ENCODE measurements at regions of chr20 and their contacts with region 1.

Region 1: DNA sequence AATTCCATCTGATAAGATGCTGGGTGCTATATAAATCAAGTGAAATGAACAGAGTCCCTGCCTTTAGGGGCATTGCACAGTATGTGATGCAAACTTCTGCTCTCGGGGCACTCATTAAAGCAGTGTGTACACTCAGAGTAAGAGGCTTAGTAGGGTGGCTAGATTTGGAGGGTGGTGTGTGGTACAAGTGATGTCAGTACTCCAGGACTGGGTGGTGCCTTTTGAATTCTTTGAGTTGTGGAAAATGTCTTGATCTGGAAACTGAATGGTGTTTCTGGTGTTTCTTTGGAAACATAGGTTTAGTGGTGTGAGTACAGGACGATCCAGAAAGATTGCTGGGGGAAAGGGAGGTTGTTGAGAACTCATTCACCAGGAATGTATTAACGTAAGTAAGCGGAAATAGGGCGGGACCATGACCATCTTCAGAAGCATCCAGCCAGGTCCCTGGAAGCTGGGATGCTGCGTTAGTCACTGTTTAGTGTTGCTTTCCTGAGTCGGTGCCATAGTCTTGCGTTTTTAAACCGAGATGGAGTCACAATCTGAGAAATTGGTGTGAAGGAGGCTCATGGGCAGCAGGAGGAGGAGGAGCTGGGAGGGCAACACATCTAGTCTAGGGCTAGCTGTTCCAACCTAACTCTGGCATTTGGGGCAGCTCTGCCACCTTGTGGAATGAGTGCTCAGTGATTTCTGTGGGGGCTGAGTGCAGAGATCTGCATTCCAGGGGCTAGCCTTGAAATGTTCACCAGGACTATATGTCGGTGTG is 70.3 kb downstream of the SCAND1 start:
- DNase-seq: peak; percentile 56 to 97
- H3K4me3 ChIP-seq: peak overlapping the region in 1 of 2 donors; percentile 39
- H3K27ac ChIP-seq: peak overlapping the region; percentile 89 to 97
- H3K4me1 ChIP-seq: peaks cover 0 to 7% of the 10 kb centered on the region in 2 donors
- H3K27me3 ChIP-seq: no peaks in the 10 kb centered on the region
- CTCF ChIP-seq: peak; percentile 68 to 82 (median 82)

Region 2: DNA sequence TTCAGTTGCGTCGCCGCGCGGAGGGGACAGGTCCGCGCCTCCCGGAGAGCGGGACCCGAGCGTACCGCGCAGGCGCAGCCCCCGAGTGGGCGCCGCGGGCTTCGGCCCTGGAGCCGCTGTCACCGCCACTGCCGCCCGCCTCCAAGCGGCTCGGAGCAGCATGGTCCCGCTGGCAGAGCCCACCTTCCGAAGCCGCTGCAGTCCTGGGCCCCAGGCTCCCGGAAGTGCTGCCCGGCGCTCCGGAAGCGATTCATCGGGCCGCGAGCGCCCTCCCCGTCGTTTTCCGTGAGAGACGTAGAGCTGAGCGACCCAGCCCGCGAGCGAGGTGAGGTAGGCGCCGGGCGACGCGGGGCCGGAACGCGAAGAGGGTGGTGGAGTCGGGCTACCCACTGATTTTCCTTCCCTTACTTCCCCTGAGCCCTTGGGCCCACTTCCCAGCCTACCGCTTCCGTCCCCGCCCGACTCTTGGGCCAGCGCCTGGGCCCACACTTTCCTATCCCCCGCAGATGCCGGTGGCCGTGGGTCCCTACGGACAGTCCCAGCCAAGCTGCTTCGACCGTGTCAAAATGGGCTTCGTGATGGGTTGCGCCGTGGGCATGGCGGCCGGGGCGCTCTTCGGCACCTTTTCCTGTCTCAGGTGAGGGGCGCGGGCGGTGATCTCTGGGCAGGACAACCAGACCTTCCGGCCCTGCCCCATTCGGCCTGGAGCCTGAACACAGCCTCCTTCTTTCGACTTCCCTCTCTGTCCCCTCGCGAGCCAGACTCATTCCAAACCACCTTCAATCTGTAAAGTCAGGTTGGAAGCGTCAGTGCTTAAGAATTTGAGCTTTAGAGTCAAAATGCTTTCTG is 184.6 kb before region 1 on chr20 and contains the starts of genes NFS1 and ROMO1:
- intact Hi-C with region 1: loop called (anchors 2 kb)
- DNase-seq: peak; percentile 37 to 92
- H3K4me3 ChIP-seq: peak within 1 kb of the TSS; percentile 87 to 94
- H3K27ac ChIP-seq: peak within 1 kb of the TSS; percentile 96
- H3K4me1 ChIP-seq: peaks cover 3 to 21% of the 10 kb centered on the region in 2 donors
- H3K27me3 ChIP-seq: no peaks in the 10 kb centered on the region
- CTCF ChIP-seq: peak; percentile 4 to 35 (median 20)
- total RNA-seq, gene NFS1: 62.2 TPM
- total RNA-seq, gene ROMO1: 85.5 TPM

Region 3: DNA sequence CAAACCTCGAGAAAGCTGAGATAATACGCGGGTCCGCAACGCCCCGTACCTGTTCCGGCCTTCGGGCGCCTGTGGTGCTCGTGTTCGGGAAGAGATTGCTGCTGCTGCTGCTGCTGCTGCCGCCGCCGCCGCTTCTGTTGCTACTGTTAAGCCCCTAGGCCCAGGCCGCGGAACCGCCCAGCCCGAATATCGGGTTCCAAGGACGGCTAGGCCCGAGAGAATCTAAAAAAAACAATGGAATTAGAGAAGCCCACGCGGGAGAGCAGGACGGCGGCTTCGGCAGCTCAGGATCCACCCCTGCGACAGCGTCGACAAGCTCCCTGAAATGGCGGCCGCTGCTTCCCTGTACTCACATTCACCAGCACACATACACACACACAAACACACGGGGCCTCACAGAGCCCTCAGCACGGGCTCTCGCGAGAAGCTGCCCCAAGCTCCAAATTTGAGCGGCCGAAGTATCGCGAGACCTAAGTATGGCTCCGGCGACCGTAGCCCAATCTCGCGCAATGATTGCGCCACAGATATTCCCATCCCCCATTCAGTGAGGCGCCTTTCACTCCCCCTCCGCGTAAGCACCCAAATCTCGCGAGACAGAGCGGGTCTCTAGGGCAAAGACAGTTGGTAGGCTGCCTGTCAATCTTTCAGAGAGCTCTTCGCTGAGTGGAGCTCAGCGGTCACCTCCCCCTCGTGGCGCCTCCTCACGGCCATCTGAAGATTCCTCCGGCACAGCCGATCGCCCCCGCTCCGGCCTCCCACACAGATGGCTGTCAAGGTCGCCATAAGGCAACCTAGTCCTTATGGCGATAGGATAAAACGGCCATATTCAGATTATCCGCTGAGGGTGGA is 141.8 kb before region 1 on chr20 and contains the start of gene RBM39:
- intact Hi-C with region 1: loop called (anchors 1 kb)
- DNase-seq: peak; percentile 98 to 100
- H3K4me3 ChIP-seq: peak within 1 kb of the TSS; percentile 84 to 86
- H3K27ac ChIP-seq: peak within 1 kb of the TSS; percentile 99 to 100
- H3K4me1 ChIP-seq: peaks cover 10 to 28% of the 10 kb centered on the region in 2 donors
- H3K27me3 ChIP-seq: no peaks in the 10 kb centered on the region
- CTCF ChIP-seq: peak; percentile 22 to 50 (median 42)
- total RNA-seq, gene RBM39: 232 TPM

Region 4: GRCh38 chr20:35771689-35772562 is 112.0 kb before region 1 on chr20 and contains the start of gene PHF20:
- intact Hi-C with region 1: loop called (anchors 1 kb)
- DNase-seq: peak; percentile 96 to 100
- H3K4me3 ChIP-seq: peak within 1 kb of the TSS; percentile 85
- H3K27ac ChIP-seq: peak within 1 kb of the TSS; percentile 96 to 98
- H3K4me1 ChIP-seq: peaks cover 0 to 30% of the 10 kb centered on the region in 2 donors
- H3K27me3 ChIP-seq: no peaks in the 10 kb centered on the region
- CTCF ChIP-seq: peak in 1 of 3 experiments; percentile 60
- total RNA-seq, gene PHF20: 109 TPM

Region 5: DNA sequence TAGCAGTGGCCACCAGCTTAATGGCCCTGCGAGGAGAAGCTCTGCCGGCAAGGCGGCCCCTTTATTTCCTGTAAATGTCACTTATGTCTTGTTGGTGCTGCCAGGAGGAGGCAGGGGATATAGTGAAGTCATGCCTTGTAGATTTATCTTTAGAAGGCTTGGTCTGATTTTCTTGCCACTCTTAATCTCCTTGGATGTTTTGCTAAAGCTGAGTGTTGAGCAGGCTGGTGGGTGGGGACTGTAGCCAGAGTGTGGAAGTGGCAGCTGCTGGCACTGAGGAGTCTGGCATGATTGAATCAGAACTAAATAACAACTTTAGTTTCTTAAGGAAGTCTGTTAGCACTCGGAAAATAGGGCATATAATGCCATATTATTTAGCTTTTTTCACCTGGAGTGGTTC is 34.3 kb before region 1 on chr20:
- intact Hi-C with region 1: loop called (anchors 2 kb)
- DNase-seq: peak in 1 of 2 donors; percentile 71
- H3K4me3 ChIP-seq: no peak overlapping the region
- H3K27ac ChIP-seq: peak overlapping the region; percentile 73 to 82
- H3K4me1 ChIP-seq: peaks cover 0 to 9% of the 10 kb centered on the region in 2 donors
- H3K27me3 ChIP-seq: no peaks in the 10 kb centered on the region
- CTCF ChIP-seq: no peak

Region 6: DNA sequence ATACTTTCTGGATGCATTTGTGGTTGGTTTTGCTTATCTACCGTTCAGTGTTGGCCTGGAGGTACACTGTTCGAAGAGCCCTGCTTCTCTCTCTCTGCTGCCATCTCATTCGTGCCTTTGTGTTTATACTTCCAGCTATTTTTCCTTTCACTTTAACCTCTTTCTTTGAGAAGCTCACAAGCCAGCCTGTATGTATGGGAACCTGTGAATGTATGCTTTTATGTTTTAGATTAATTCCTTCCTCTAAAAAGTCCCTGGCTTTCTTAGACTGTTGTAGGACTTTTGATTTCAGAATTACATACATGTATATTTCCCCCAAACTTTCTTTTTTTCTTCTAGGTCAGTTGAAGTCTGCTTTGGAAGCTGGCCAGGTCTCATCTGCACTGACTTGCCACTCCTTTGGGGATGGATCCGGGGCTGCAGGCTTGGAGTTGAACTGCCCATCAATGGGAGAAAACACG is 12.6 kb before region 1 on chr20:
- intact Hi-C with region 1: loop called (anchors 1 kb)
- DNase-seq: no peak
- H3K4me3 ChIP-seq: peak overlapping the region; percentile 18 to 40
- H3K27ac ChIP-seq: peak overlapping the region; percentile 45 to 77
- H3K4me1 ChIP-seq: peaks cover 0 to 9% of the 10 kb centered on the region in 2 donors
- H3K27me3 ChIP-seq: no peaks in the 10 kb centered on the region
- CTCF ChIP-seq: no peak

Region 7: GRCh38 chr20:35907017-35907701 is 23.2 kb after region 1 on chr20:
- intact Hi-C with region 1: no loop called
- DNase-seq: no peak
- H3K4me3 ChIP-seq: no peak overlapping the region
- H3K27ac ChIP-seq: no peak overlapping the region
- H3K4me1 ChIP-seq: no peaks in the 10 kb centered on the region
- H3K27me3 ChIP-seq: no peaks in the 10 kb centered on the region
- CTCF ChIP-seq: no peak

Region 8: GRCh38 chr20:35954200-35954906 is 70.4 kb after region 1 on chr20 and contains the start of gene SCAND1:
- intact Hi-C with region 1: loop called (anchors 1 kb)
- DNase-seq: peak; percentile 72 to 96
- H3K4me3 ChIP-seq: peak within 1 kb of the TSS; percentile 94
- H3K27ac ChIP-seq: peak within 1 kb of the TSS; percentile 98 to 99
- H3K4me1 ChIP-seq: peaks cover 0 to 16% of the 10 kb centered on the region in 2 donors
- H3K27me3 ChIP-seq: no peaks in the 10 kb centered on the region
- CTCF ChIP-seq: peak; percentile 96 to 98 (median 97)
- total RNA-seq, gene SCAND1: 146 TPM